Activated T-helper 2 cell treated with anti-CD3 and anti-CD28 coated beads, Interferon-gamma antibody, Interleukin-2, Interleukin-4, amounts not matched to agents 10 μg/mL and 5 μg/mL and 100 μg/mL, durations not matched to agents 14 hours and 24 hours and 36 hours (primary cell): ENCODE measurements at regions of chr7 and their contacts with region 1.

Region 1: DNA sequence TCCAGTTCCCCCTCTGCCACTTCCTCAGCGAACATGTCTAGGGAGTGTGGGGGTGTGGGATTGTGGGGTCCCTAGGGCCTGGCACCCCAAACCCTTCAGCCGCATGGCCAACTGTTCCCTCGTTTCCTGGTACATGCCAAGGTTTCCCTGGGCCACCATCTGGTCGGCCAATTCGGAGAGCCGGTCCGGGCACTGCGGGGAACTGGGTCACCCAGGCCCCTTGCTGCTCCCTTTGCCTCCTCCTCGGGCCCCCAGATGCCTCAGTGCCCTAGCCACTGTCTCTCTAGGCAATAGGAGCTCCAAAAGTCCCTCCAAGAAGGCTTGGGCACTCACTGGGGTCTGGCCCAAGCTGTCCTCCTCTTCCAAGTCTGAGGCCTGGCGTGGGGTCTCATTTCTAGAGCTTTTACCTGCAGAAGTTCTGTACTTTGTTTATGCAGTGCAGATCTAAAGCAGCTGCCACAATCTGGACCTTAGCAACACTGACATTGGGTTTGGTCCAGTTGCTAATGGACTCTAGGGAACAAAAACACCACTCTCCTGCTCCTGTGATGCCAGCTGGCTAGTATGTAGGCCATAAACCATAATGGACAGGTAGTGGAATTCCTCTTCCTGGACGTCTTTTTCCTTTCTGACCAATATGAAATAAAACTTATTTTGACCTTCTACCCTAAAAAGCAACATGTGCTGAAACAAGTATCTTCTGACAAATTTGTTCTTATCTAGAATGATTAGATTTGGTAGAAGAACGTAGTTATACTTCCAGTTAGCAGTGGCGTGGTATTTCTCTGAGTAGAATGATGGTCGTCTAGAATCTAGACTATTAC is 172.9 kb downstream of the LRRC4 start:
- DNase-seq: no peak
- H3K4me3 Mint-ChIP-seq: no peak overlapping the region
- H3K27ac Mint-ChIP-seq: peak overlapping the region; percentile 15
- H3K4me1 Mint-ChIP-seq: peaks cover 46% of the 10 kb centered on the region
- H3K27me3 Mint-ChIP-seq: no peaks in the 10 kb centered on the region

Region 2: GRCh38 chr7:127651556-127652332 is 206.6 kb before region 1 on chr7 and contains the start of gene SND1:
- intact Hi-C with region 1: loop called (anchors 10 kb)
- DNase-seq: peak; percentile 99
- H3K4me3 Mint-ChIP-seq: peak within 1 kb of the TSS; percentile 100
- H3K27ac Mint-ChIP-seq: peak within 1 kb of the TSS; percentile 99
- H3K4me1 Mint-ChIP-seq: peaks cover 31% of the 10 kb centered on the region
- H3K27me3 Mint-ChIP-seq: peaks cover 5% of the 10 kb centered on the region
- total RNA-seq, gene SND1: 311 TPM in 2 replicates

Region 3: DNA sequence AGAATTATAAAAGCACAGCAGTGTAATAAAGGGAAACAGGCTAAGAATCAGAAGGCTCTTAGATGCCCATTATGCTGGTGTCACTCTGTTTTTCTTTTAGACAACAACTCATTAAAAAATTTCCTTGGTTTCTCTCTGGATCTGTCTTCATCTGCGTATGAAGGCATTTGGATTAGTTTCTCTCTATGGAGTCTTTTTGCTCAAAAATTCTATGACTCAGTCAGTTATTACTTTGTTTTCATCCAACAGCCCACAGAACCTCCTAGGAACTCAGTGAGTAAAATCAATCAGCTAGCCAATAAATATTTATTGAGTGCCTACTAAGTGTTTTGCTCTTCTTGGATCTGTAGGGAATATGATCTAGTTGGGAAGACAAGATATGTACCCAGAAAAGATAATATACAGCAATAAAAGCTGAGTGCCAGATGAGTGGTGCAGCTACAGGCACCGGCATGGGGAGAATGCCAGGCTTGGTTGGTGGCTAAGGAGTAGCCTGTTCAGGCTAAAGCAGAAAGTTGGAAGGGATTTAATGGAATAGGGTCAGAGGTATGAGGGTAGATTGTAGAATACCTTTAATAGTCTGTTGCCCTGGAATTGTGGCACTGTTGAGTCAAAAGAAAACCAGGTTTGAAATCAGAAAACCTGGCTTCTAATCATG is 16.8 kb after region 1 on chr7:
- intact Hi-C with region 1: loop called (anchors 1 kb)
- DNase-seq: no peak
- H3K4me3 Mint-ChIP-seq: no peak overlapping the region
- H3K27ac Mint-ChIP-seq: no peak overlapping the region
- H3K4me1 Mint-ChIP-seq: peaks cover 23% of the 10 kb centered on the region
- H3K27me3 Mint-ChIP-seq: no peaks in the 10 kb centered on the region

Region 4: GRCh38 chr7:127885843-127886242 is 27.5 kb after region 1 on chr7:
- intact Hi-C with region 1: no loop called
- DNase-seq: no peak
- H3K4me3 Mint-ChIP-seq: no peak overlapping the region
- H3K27ac Mint-ChIP-seq: no peak overlapping the region
- H3K4me1 Mint-ChIP-seq: peaks cover 21% of the 10 kb centered on the region
- H3K27me3 Mint-ChIP-seq: no peaks in the 10 kb centered on the region

Region 5: GRCh38 chr7:127905491-127906330 is 47.4 kb after region 1 on chr7:
- intact Hi-C with region 1: loop called (anchors 2 kb)
- DNase-seq: peak; percentile 10
- H3K4me3 Mint-ChIP-seq: no peak overlapping the region
- H3K27ac Mint-ChIP-seq: peak overlapping the region; percentile 61
- H3K4me1 Mint-ChIP-seq: peaks cover 62% of the 10 kb centered on the region
- H3K27me3 Mint-ChIP-seq: no peaks in the 10 kb centered on the region

Region 6: DNA sequence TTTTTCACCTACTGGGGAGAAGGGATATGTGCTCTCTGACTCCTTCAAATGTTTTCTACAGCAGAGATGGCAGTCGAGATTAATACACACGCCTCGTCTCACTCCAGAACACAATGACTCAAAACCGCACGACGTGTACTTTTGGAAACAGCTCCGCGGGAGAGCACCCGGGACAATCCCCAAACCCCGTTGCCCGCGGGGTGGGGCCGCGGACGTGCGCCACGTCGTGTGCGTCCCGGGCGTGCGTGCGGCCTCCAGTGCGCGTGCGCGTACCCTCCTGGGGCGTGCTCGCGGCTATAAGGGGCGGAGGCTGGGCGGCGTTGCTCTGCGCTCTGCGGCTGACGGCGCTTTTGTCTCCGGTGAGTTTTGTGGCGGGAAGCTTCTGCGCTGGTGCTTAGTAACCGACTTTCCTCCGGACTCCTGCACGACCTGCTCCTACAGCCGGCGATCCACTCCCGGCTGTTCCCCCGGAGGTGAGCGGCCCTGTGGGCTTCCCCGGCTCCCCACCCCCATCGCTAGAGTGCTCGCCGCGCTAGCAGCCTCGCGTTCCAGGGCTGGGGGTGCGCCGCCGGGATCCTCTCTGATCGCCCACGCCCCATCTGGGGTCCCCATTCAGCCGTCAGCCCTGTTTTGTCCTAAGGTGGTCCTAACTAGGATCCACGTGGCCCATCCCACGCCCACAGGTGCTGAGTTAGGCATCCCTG is 597.4 kb after region 1 on chr7 and contains the start of gene HILPDA:
- intact Hi-C with region 1: loop called (anchors 10 kb)
- DNase-seq: peak; percentile 95
- H3K4me3 Mint-ChIP-seq: peak within 1 kb of the TSS; percentile 88
- H3K27ac Mint-ChIP-seq: peak within 1 kb of the TSS; percentile 99
- H3K4me1 Mint-ChIP-seq: peaks cover 64% of the 10 kb centered on the region
- H3K27me3 Mint-ChIP-seq: no peaks in the 10 kb centered on the region
- total RNA-seq, gene HILPDA: 406 and 416 TPM in 2 replicates